Natural killer cell (primary cell): ENCODE measurements at regions of chr13 and their contacts with region 1.

Region 1: DNA sequence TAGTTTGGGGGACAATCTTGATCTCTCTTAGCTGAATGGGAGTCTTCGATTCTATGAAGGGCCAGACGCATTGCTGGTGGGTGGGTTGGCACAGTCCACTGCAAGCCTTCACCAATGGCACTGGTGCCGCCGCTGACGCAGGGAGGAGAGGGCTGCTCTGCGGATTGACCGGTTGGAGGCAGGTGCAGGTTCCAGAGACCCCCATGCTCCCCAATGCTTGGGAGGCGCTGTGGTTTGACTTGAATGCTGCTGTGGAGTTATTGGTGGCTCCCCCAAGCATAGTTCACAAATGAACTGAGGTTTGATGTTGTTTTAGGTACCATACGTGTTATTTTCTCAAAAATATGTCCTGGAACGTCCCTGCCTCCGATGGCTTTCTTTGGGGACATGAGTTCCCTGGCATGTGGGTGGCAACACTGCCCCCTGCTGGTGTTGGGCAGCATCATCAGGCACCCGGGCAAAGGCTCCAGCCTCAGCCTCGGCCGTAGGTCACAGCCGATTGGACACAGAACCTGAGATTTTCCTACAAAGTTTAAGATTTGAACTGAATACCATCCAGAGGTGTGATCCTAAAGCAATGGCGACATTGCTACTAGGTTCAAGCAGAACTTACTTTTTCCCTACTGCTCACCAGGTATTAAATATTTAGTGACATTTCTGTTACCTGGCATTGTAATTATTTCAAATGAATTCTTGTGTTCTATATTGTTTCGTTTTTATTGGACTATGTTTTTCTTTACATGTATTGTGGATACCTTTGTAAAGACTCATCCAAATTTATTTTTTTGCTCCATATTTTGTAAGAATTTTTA is 95.5 kb downstream of the ANKRD10 start:
- DNase-seq: peak; percentile 74 to 88
- ATAC-seq: peak; percentile 82 to 97 (median 94)
- H3K4me3 ChIP-seq: no peak overlapping the region
- H3K4me3 Mint-ChIP-seq: no peak overlapping the region
- H3K27ac ChIP-seq: no peak overlapping the region
- H3K27ac Mint-ChIP-seq: no peak overlapping the region
- H3K4me1 ChIP-seq: peaks cover 5% of the 10 kb centered on the region
- H3K4me1 Mint-ChIP-seq: peaks cover 5 to 6% of the 10 kb centered on the region in 2 donors
- H3K27me3 ChIP-seq: no peaks in the 10 kb centered on the region
- H3K27me3 Mint-ChIP-seq: peaks cover 3 to 17% of the 10 kb centered on the region in 2 donors
- CTCF ChIP-seq: peak; percentile 98

Region 2: DNA sequence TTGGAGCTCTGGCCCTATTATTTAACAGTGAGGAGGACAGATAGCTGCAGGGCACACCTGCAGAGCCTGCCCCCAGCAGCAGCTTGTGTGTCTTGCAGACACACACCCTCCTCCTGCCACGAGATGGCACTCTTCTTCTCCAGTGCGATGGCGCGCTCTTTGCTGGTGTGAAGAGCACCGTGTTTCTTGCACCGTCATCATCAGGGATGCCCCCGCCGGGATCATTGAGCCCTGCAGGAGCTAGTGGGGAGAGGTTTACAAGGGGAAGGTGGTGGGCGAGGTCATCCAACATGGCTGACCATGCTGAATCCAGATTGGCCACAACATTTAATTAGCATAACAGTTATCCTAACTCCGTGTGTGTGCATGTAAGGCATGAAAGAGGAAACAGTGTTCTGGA is 363.5 kb before region 1 on chr13:
- intact Hi-C with region 1: loop called (anchors 2 kb)
- DNase-seq: peak in 1 of 2 donors; percentile 74
- ATAC-seq: peak; percentile 54 to 84 (median 68)
- H3K4me3 ChIP-seq: no peak overlapping the region
- H3K4me3 Mint-ChIP-seq: no peak overlapping the region
- H3K27ac ChIP-seq: no peak overlapping the region
- H3K27ac Mint-ChIP-seq: no peak overlapping the region
- H3K4me1 ChIP-seq: peaks cover 4% of the 10 kb centered on the region
- H3K4me1 Mint-ChIP-seq: peaks cover 6% of the 10 kb centered on the region in 2 donors
- H3K27me3 ChIP-seq: no peaks in the 10 kb centered on the region
- H3K27me3 Mint-ChIP-seq: peaks cover 17% of the 10 kb centered on the region in 2 donors
- CTCF ChIP-seq: peak; percentile 30

Region 3: GRCh38 chr13:110593430-110594130 is 225.8 kb before region 1 on chr13:
- intact Hi-C with region 1: loop called (anchors 1 kb)
- DNase-seq: peak in 1 of 2 donors; percentile 67
- ATAC-seq: peak; percentile 38 to 64 (median 44)
- H3K4me3 ChIP-seq: no peak overlapping the region
- H3K4me3 Mint-ChIP-seq: no peak overlapping the region
- H3K27ac ChIP-seq: no peak overlapping the region
- H3K27ac Mint-ChIP-seq: no peak overlapping the region
- H3K4me1 ChIP-seq: no peaks in the 10 kb centered on the region
- H3K4me1 Mint-ChIP-seq: no peaks in the 10 kb centered on the region
- H3K27me3 ChIP-seq: no peaks in the 10 kb centered on the region
- H3K27me3 Mint-ChIP-seq: peaks cover 8 to 14% of the 10 kb centered on the region in 2 donors
- CTCF ChIP-seq: peak; percentile 38

Region 4: GRCh38 chr13:110683203-110683883 is 136.1 kb before region 1 on chr13:
- intact Hi-C with region 1: loop called (anchors 1 kb)
- DNase-seq: peak in 1 of 2 donors; percentile 56
- ATAC-seq: peak in 2 of 3 donors; percentile 74 to 82
- H3K4me3 ChIP-seq: no peak overlapping the region
- H3K4me3 Mint-ChIP-seq: no peak overlapping the region
- H3K27ac ChIP-seq: no peak overlapping the region
- H3K27ac Mint-ChIP-seq: no peak overlapping the region
- H3K4me1 ChIP-seq: peaks cover 4% of the 10 kb centered on the region
- H3K4me1 Mint-ChIP-seq: peaks cover 0 to under 1% of the 10 kb centered on the region in 2 donors
- H3K27me3 ChIP-seq: no peaks in the 10 kb centered on the region
- H3K27me3 Mint-ChIP-seq: no peaks in the 10 kb centered on the region
- CTCF ChIP-seq: peak; percentile 80

Region 5: GRCh38 chr13:112225429-112226090 is 1406.2 kb after region 1 on chr13:
- intact Hi-C with region 1: loop called (anchors 10 kb)
- DNase-seq: no peak
- ATAC-seq: no peak
- H3K4me3 ChIP-seq: no peak overlapping the region
- H3K4me3 Mint-ChIP-seq: no peak overlapping the region
- H3K27ac ChIP-seq: no peak overlapping the region
- H3K27ac Mint-ChIP-seq: no peak overlapping the region
- H3K4me1 ChIP-seq: no peaks in the 10 kb centered on the region
- H3K4me1 Mint-ChIP-seq: no peaks in the 10 kb centered on the region
- H3K27me3 ChIP-seq: no peaks in the 10 kb centered on the region
- H3K27me3 Mint-ChIP-seq: no peaks in the 10 kb centered on the region
- CTCF ChIP-seq: no peak